ENCODE measurements at regions of chr14 and their contacts with region 1.

Region 1: GRCh38 chr14:70821584-70822529 is 12.5 kb upstream of the MAP3K9 start:
- DNase-seq: peak; percentile 84

Region 2: GRCh38 chr14:70972107-70972976 is 150.5 kb after region 1 on chr14:
- intact Hi-C with region 1: loop called (anchors 1 kb)
- DNase-seq: peak; percentile 83

Measured in cardiac septum (tissue), 1 donor.